CD4-positive, alpha-beta memory T cell (primary cell): ENCODE measurements at regions of chr22 and their contacts with region 1.

Region 1: GRCh38 chr22:38569972-38570778 is at the start of gene DMC1:
- DNase-seq: peak; percentile 87 to 96 (median 90)
- H3K4me3 ChIP-seq: peak within 1 kb of the TSS; percentile 66 to 85
- H3K4me3 Mint-ChIP-seq: peak within 1 kb of the TSS; percentile 88 to 97 (median 92)
- H3K27ac ChIP-seq: peak within 1 kb of the TSS; percentile 76
- H3K27ac Mint-ChIP-seq: peak within 1 kb of the TSS; percentile 88 to 97 (median 96)
- H3K4me1 ChIP-seq: peaks cover 17% of the 10 kb centered on the region
- H3K4me1 Mint-ChIP-seq: peaks cover 12 to 24% (median 17%) of the 10 kb centered on the region in 4 donors
- H3K27me3 ChIP-seq: no peaks in the 10 kb centered on the region
- H3K27me3 Mint-ChIP-seq: no peaks in the 10 kb centered on the region
- total RNA-seq, gene DMC1: 0.29 to 1.1 TPM

Region 2: GRCh38 chr22:38051900-38052862 is 518.0 kb before region 1 on chr22:
- CTCF ChIA-PET with region 1: interaction called, 14 read pairs
- POLR2A ChIA-PET with region 1: interaction called, 5 read pairs
- intact Hi-C with region 1: no loop called
- DNase-seq: peak; percentile 68 to 73 (median 71)
- H3K4me3 ChIP-seq: no peak overlapping the region
- H3K4me3 Mint-ChIP-seq: no peak overlapping the region
- H3K27ac ChIP-seq: no peak overlapping the region
- H3K27ac Mint-ChIP-seq: peak overlapping the region in 4 of 7 donors; percentile 18 to 82 (median 64)
- H3K4me1 ChIP-seq: peaks cover 10% of the 10 kb centered on the region
- H3K4me1 Mint-ChIP-seq: peaks cover 3 to 18% (median 11%) of the 10 kb centered on the region in 4 donors
- H3K27me3 ChIP-seq: no peaks in the 10 kb centered on the region
- H3K27me3 Mint-ChIP-seq: peaks cover 0 to 3% of the 10 kb centered on the region in 2 donors

Region 3: GRCh38 chr22:38412435-38413084 is 157.6 kb before region 1 on chr22:
- CTCF ChIA-PET with region 1: interaction called, 4 read pairs
- POLR2A ChIA-PET with region 1: no interaction called
- intact Hi-C with region 1: loop called (anchors 2 kb)
- DNase-seq: peak in 4 of 5 donors; percentile 22 to 38 (median 28)
- H3K4me3 ChIP-seq: no peak overlapping the region
- H3K4me3 Mint-ChIP-seq: peak overlapping the region in 2 of 8 donors; percentile 31 to 55
- H3K27ac ChIP-seq: no peak overlapping the region
- H3K27ac Mint-ChIP-seq: no peak overlapping the region
- H3K4me1 ChIP-seq: peaks cover 7% of the 10 kb centered on the region
- H3K4me1 Mint-ChIP-seq: peaks cover 0 to 4% (median 2%) of the 10 kb centered on the region in 4 donors
- H3K27me3 ChIP-seq: no peaks in the 10 kb centered on the region
- H3K27me3 Mint-ChIP-seq: peaks cover 1 to 2% of the 10 kb centered on the region in 2 donors

Region 4: GRCh38 chr22:38506118-38506962 is 63.8 kb before region 1 on chr22 and contains the start of gene DDX17:
- CTCF ChIA-PET with region 1: no interaction called
- POLR2A ChIA-PET with region 1: interaction called, 5 read pairs
- intact Hi-C with region 1: loop called (anchors 1 kb)
- DNase-seq: peak; percentile 96 to 98 (median 96)
- H3K4me3 ChIP-seq: peak within 1 kb of the TSS; percentile 75 to 94
- H3K4me3 Mint-ChIP-seq: peak within 1 kb of the TSS; percentile 98 to 100 (median 99)
- H3K27ac ChIP-seq: peak within 1 kb of the TSS; percentile 99
- H3K27ac Mint-ChIP-seq: peak within 1 kb of the TSS; percentile 99 to 100 (median 100)
- H3K4me1 ChIP-seq: peaks cover 44% of the 10 kb centered on the region
- H3K4me1 Mint-ChIP-seq: peaks cover 37 to 54% (median 45%) of the 10 kb centered on the region in 4 donors
- H3K27me3 ChIP-seq: no peaks in the 10 kb centered on the region
- H3K27me3 Mint-ChIP-seq: no peaks in the 10 kb centered on the region
- total RNA-seq, gene DDX17: 927 to 960 TPM

Region 5: GRCh38 chr22:38656256-38657044 is 86.3 kb after region 1 on chr22 and contains the starts of genes CBY1 and FAM227A:
- CTCF ChIA-PET with region 1: no interaction called
- POLR2A ChIA-PET with region 1: interaction called, 5 read pairs
- intact Hi-C with region 1: loop called (anchors 1 kb)
- DNase-seq: peak; percentile 85 to 92 (median 86)
- H3K4me3 ChIP-seq: peak within 1 kb of the TSS; percentile 90 to 98
- H3K4me3 Mint-ChIP-seq: peak within 1 kb of the TSS; percentile 93 to 99 (median 96)
- H3K27ac ChIP-seq: peak within 1 kb of the TSS; percentile 88
- H3K27ac Mint-ChIP-seq: peak within 1 kb of the TSS; percentile 98 to 100 (median 99)
- H3K4me1 ChIP-seq: peaks cover 16% of the 10 kb centered on the region
- H3K4me1 Mint-ChIP-seq: peaks cover 10 to 24% (median 19%) of the 10 kb centered on the region in 4 donors
- H3K27me3 ChIP-seq: no peaks in the 10 kb centered on the region
- H3K27me3 Mint-ChIP-seq: no peaks in the 10 kb centered on the region
- total RNA-seq, gene CBY1: 30.4 to 35.2 TPM
- total RNA-seq, gene FAM227A: 0.44 TPM in 1 of 2 experiments, not detected in the other

Region 6: DNA sequence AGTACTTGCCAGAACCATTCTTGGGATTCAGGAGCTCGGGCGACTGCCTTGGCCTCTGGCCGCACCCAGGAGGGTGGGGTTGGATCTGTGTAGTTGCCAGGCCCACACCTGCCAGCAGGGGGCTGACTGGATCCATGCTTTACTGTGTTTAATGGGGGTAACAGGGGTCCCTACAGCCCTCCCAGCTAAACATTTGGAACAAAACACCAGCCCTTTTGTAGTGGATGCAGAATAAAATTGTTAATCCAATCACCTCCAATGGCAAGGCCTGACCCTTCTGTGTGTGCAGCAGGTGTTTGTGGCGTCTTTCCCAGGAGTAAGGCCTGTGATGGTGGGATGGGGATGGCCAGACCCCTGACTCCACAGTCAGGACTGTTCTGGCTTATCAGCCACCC is 163.2 kb after region 1 on chr22:
- CTCF ChIA-PET with region 1: no interaction called
- POLR2A ChIA-PET with region 1: no interaction called
- intact Hi-C with region 1: no loop called
- DNase-seq: peak in 3 of 5 donors; percentile 41 to 51 (median 41)
- H3K4me3 ChIP-seq: no peak overlapping the region
- H3K4me3 Mint-ChIP-seq: peak overlapping the region in 2 of 8 donors; percentile 4 to 12
- H3K27ac ChIP-seq: peak overlapping the region; percentile 30
- H3K27ac Mint-ChIP-seq: peak overlapping the region; percentile 49 to 88 (median 84)
- H3K4me1 ChIP-seq: peaks cover 39% of the 10 kb centered on the region
- H3K4me1 Mint-ChIP-seq: peaks cover 18 to 60% (median 33%) of the 10 kb centered on the region in 4 donors
- H3K27me3 ChIP-seq: no peaks in the 10 kb centered on the region
- H3K27me3 Mint-ChIP-seq: no peaks in the 10 kb centered on the region